ENCODE measurements at regions of chr20 and their contacts with region 1.

Region 1: GRCh38 chr20:37336369-37337207 is 9.4 kb upstream of the SRC start:
- DNase-seq: peak; percentile 8
- H3K4me3 Mint-ChIP-seq: peak overlapping the region; percentile 61
- H3K27ac Mint-ChIP-seq: peak overlapping the region; percentile 55
- H3K4me1 Mint-ChIP-seq: peaks cover 22% of the 10 kb centered on the region
- H3K27me3 Mint-ChIP-seq: no peaks in the 10 kb centered on the region

Region 2: GRCh38 chr20:37295001-37295400 is 41.6 kb before region 1 on chr20:
- intact Hi-C with region 1: loop called (anchors 5 kb)
- DNase-seq: no peak
- H3K4me3 Mint-ChIP-seq: no peak overlapping the region
- H3K27ac Mint-ChIP-seq: no peak overlapping the region
- H3K4me1 Mint-ChIP-seq: peaks cover 58% of the 10 kb centered on the region
- H3K27me3 Mint-ChIP-seq: no peaks in the 10 kb centered on the region

Region 3: DNA sequence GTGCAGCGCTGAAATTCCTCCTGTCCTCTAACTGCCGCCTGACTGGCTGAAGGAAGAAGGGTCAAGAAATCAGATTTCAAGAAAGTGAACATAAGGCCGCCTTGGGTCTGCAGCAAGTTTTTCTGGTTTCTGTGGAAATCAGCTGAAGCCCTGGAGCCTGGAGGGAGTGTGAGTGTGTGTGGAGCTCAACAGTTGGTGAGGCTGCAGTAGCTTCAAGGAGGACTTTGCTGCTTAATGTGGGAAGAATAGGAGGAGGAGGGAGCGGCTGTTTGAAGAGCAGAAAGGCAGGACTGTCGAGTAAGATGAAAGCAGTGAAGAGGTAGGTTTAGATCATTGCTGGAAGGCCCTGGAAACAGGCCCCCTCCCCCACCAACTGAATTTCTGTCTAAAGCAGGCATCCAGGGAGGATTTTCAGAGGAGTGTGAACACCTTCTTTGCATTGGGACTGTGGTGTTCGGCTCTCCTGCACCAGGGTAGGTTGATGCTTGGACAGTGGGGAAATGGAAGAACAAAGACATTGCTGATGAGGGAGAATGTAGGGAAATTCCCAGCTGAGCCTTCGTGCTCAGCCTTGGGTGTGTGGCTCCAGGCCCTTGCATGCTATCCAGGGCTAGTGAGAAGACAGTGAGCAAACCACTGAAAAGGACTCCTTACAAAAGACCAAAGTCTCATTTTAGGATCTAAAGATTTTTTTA is 486.8 kb after region 1 on chr20:
- intact Hi-C with region 1: no loop called
- DNase-seq: no peak
- H3K4me3 Mint-ChIP-seq: no peak overlapping the region
- H3K27ac Mint-ChIP-seq: peak overlapping the region; percentile 15
- H3K4me1 Mint-ChIP-seq: peaks cover 14% of the 10 kb centered on the region
- H3K27me3 Mint-ChIP-seq: no peaks in the 10 kb centered on the region